Common myeloid progenitor, CD34-positive (primary cell): ENCODE measurements at regions of chr4 and their contacts with region 1.

Region 1: GRCh38 chr4:119628308-119629141 is at the start of gene PDE5A:
- DNase-seq: peak; percentile 70 to 87 (median 83)
- H3K4me3 ChIP-seq: peak within 1 kb of the TSS; percentile 62 to 87 (median 72)
- H3K27ac ChIP-seq: no peak within 1 kb of the TSS
- H3K4me1 ChIP-seq: peaks cover 0 to 27% (median 24%) of the 10 kb centered on the region in 4 experiments
- H3K27me3 ChIP-seq: peaks cover 0 to 20% (median 17%) of the 10 kb centered on the region in 5 experiments

Region 2: DNA sequence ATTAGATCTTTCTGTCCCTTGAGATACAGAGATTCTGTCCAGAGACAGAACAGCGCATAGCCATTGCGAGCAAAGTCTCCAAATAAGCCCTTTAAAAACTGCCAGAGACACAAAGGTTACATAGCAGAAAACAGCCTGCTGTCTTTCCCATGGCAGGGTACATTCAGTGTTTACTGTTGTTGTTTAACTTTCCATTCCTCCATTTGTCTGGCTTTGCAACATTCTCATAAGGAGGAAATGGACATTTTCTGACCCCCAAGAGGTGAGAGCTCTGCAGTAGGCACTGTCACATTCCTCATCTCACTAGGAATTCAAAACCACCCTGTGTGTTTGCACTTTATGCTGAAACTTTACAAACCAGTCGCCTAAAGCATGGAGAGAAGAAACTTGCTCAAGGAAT is 48.2 kb before region 1 on chr4:
- CTCF ChIA-PET with region 1: no interaction called
- POLR2A ChIA-PET with region 1: no interaction called
- DNase-seq: no peak
- H3K4me3 ChIP-seq: no peak overlapping the region
- H3K27ac ChIP-seq: no peak overlapping the region
- H3K4me1 ChIP-seq: no peaks in the 10 kb centered on the region
- H3K27me3 ChIP-seq: no peaks in the 10 kb centered on the region

Region 3: GRCh38 chr4:119641765-119642164 is 13.2 kb after region 1 on chr4:
- CTCF ChIA-PET with region 1: interaction called, 17 read pairs
- POLR2A ChIA-PET with region 1: no interaction called
- DNase-seq: no peak
- H3K4me3 ChIP-seq: no peak overlapping the region
- H3K27ac ChIP-seq: no peak overlapping the region
- H3K4me1 ChIP-seq: no peaks in the 10 kb centered on the region
- H3K27me3 ChIP-seq: no peaks in the 10 kb centered on the region